Activated CD8-positive, alpha-beta T cell treated with anti-CD3 and anti-CD28 coated beads for 36 hours (primary cell): ENCODE measurements at regions of chr7 and their contacts with region 1.

Region 1: DNA sequence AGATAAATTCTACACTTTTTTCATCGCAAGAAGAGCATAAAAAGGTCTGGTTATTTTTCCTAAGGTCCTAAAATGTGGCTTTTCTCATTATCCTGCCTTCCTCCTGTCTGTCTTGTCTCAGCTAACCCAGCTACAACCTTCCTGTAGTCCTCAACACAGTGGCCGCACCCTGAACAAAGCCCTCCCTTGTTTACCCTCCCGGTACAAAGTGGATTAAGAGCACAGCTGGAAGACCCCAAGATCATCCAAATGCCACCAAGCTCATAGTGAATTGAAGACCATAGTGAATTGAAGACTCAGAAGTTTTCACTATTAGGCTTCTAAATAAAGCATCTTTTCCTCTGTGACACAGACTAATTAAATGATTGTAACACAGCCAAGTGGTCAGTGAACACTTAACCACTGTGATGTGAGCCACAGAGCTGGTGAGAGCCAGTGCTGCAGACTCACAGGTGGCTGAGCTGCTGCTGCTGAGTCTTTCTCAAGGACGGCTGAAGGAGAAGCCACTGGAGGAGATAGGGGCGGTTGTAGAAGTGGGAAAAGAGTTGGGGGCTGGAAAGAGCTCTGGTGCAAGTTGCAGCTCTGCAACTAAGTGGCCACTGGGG is 123.6 kb downstream of the ATXN7L1 start:
- DNase-seq: no peak
- ATAC-seq: no peak
- H3K4me3 Mint-ChIP-seq: no peak overlapping the region
- H3K27ac Mint-ChIP-seq: no peak overlapping the region
- H3K4me1 Mint-ChIP-seq: no peaks in the 10 kb centered on the region
- H3K27me3 Mint-ChIP-seq: no peaks in the 10 kb centered on the region
- CTCF ChIP-seq: no peak

Region 2: DNA sequence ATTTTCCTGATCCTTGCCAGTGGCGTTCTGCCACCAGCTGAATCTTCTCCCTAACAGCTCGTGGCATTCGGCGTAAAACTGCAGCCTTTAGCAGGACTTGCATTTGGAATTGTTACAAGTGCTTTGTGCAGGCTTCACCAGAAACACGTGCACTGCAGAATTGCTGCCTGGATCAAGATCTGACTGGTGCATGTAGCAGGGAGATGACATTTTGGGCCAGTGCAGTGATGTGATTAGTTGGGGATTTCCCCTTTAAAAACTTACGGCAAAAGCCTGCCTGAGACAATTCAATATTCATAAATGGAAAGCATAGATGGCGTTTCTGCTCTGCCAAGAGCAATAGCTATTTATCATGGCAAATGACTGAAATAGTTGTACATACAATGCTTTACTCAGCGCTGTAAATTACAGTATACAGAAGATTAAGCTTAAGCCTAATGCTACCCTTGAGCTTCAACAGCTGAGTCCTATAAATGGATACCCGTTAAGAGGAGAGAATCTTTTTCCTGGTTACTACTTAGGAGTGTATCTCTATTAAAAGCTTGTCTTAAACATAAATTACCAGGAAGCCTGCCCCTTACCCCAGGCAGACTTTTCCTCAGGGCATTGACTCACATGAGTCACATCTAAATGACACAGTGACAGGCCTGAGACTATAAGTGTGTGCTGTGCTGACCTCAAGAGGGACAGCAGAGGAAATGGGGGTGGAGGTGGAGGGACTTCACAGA is 17.3 kb after region 1 on chr7:
- CTCF ChIA-PET with region 1: interaction called, 13 read pairs
- POLR2A ChIA-PET with region 1: no interaction called
- intact Hi-C with region 1: no loop called
- DNase-seq: peak; percentile 13
- ATAC-seq: peak; percentile 49
- H3K4me3 Mint-ChIP-seq: no peak overlapping the region
- H3K27ac Mint-ChIP-seq: no peak overlapping the region
- H3K4me1 Mint-ChIP-seq: peaks cover 13% of the 10 kb centered on the region
- H3K27me3 Mint-ChIP-seq: no peaks in the 10 kb centered on the region
- CTCF ChIP-seq: no peak